ENCODE measurements at regions of chr14 and their contacts with region 1.

Region 1: DNA sequence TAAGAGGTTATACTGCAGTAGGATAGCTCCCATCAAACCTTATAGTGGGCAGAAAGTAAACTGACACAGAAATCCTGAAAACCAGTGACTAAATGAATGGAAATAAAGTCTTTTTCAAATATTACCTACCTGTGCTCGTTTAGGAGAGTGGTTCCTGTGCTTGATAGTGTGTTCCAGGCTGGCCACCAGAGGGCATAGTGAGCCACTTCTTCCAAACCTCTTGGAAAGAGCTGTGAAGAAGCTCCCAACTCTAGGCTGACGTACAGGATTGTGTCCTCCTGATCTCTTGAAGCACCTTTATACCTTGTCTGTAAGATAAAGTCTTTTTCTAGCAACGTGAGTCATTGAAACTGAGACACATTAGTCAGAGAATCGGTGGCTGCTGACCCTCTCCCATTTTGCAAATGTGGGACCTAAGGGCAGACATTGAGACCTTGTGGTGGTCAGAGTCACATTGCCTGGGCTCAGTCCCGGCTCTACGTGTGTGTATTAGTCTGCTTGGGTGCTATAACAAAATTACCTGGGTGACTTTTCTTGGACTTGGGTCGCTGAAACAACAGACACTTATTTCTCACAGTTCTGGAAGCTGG is 17.6 kb downstream of the TDP1 start:
- DNase-seq: peak; percentile 62
- ATAC-seq: peak; percentile 75
- H3K4me3 Mint-ChIP-seq: no peak overlapping the region
- H3K27ac Mint-ChIP-seq: peak overlapping the region; percentile 24
- H3K4me1 Mint-ChIP-seq: no peaks in the 10 kb centered on the region
- H3K27me3 Mint-ChIP-seq: no peaks in the 10 kb centered on the region

Region 2: DNA sequence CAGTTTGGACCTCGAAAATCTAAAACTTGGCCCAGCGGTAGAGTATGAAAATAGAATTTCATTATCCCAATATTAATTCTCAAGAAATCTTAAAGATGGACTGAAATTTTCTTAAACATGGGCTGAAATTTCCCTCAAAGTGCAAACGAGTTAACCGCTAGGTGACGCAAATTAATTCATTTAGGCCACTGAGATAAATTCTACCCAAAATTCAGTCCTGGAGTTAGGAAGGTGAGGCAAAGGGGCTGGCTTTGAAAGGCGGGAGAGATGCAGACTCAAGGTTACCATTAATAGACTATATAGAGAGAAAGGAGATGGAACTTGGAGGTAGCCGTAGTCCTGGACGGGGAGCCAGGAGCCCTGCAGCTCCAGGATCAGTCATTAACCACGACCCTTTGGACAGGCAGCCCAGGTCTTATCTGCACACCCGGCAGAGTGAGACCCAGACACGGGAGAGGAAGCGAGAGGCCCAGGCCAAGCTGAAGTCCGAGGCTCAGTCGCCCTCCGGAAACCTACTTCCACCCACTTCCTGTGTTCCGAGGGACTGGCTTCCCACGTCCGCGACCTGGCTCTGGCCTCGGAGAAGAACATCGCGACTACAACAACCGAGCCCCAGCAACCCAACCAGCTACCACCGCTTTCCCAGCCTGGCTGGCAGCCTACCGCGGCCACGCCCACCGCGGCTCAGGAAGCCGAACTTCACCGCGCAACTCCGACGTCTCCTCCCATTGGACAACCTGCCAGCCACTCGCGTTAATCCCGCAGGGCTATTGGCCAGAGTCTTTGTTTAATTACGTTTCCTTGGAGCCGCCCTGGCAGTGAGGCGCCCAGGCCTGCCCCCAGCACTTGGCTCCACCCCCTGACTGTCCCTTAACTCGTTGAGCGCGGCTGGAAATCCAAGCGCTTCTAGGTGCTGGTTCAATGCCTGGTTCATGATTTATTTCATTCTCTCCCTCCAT is 19.0 kb before region 1 on chr14 and contains the start of gene EFCAB11:
- CTCF ChIA-PET with region 1: interaction called, 96 read pairs
- POLR2A ChIA-PET with region 1: interaction called, 5 read pairs
- DNase-seq: peak; percentile 98
- ATAC-seq: peak; percentile 85
- H3K4me3 Mint-ChIP-seq: peak within 1 kb of the TSS; percentile 99
- H3K27ac Mint-ChIP-seq: peak within 1 kb of the TSS; percentile 96
- H3K4me1 Mint-ChIP-seq: peaks cover 40% of the 10 kb centered on the region
- H3K27me3 Mint-ChIP-seq: no peaks in the 10 kb centered on the region
- total RNA-seq, gene EFCAB11: 9.8 to 11.9 TPM

Region 3: DNA sequence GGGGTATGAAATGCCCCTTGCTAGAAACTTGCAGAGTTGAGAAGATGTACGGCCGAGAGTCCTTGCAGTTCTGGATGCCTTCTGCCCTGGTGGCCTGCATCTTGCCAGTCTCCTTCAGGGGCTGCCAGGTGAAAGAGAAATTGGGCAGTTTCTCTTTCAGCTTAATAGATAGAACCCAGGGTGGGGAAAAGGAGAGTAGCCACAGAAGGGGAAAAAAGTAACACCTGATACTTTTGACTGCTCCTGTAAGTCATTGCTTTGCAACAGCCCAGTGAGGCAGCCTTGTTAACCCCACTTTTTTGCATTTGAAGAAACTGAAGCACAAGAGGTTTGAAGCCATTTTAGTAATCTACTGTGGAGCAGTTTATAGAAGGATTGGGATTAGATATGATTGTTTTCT is 10.0 kb after region 1 on chr14:
- CTCF ChIA-PET with region 1: interaction called, 38 read pairs
- POLR2A ChIA-PET with region 1: no interaction called
- DNase-seq: no peak
- ATAC-seq: no peak
- H3K4me3 Mint-ChIP-seq: no peak overlapping the region
- H3K27ac Mint-ChIP-seq: no peak overlapping the region
- H3K4me1 Mint-ChIP-seq: no peaks in the 10 kb centered on the region
- H3K27me3 Mint-ChIP-seq: no peaks in the 10 kb centered on the region

Region 4: GRCh38 chr14:90039253-90040010 is 66.1 kb after region 1 on chr14:
- CTCF ChIA-PET with region 1: no interaction called
- POLR2A ChIA-PET with region 1: no interaction called
- DNase-seq: no peak
- ATAC-seq: no peak
- H3K4me3 Mint-ChIP-seq: no peak overlapping the region
- H3K27ac Mint-ChIP-seq: no peak overlapping the region
- H3K4me1 Mint-ChIP-seq: no peaks in the 10 kb centered on the region
- H3K27me3 Mint-ChIP-seq: no peaks in the 10 kb centered on the region

Region 5: GRCh38 chr14:90105756-90106155 is 132.4 kb after region 1 on chr14:
- CTCF ChIA-PET with region 1: no interaction called
- POLR2A ChIA-PET with region 1: no interaction called
- DNase-seq: no peak
- ATAC-seq: no peak
- H3K4me3 Mint-ChIP-seq: no peak overlapping the region
- H3K27ac Mint-ChIP-seq: no peak overlapping the region
- H3K4me1 Mint-ChIP-seq: no peaks in the 10 kb centered on the region
- H3K27me3 Mint-ChIP-seq: peaks cover 4% of the 10 kb centered on the region

Region 6: DNA sequence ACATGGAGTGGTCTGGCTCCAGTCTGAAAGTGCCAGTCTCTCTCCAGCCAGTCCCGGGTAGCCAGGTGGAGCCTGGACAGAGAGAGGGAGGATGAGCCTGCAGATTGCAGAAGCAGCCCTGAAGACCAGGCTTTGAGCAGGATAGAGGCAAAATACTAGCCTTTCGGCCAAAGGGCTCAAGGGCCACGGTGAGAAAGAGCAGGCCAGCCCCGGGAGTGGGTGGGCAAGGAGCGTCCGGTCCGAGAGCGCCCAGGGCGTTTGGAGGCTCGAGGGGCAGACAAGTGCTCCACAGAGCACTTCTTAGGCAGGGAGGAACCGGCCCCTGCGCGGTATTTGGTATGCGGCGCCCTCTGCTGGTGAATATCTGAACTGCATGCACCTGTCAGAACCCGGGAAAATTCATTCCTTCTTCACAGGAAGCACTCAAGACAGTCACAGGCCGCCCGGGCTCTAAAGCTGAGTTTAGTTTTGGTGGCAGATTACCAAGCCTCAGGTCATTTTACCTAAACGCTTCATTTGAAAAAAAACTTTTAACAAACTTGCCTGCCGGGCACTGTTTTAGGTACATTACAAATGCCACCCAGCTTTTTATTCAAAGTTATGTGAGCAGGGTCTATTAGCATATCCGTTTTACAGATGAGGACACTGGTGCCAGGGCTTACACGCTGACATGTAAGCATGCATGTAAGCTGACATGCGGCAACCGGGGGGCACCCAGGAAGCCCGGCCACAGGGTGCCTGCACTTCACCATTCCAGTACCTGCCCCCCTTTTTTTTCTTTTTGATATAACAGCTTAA is 262.0 kb after region 1 on chr14:
- CTCF ChIA-PET with region 1: interaction called, 29 read pairs
- POLR2A ChIA-PET with region 1: no interaction called
- DNase-seq: peak; percentile 77
- ATAC-seq: peak; percentile 81
- H3K4me3 Mint-ChIP-seq: no peak overlapping the region
- H3K27ac Mint-ChIP-seq: no peak overlapping the region
- H3K4me1 Mint-ChIP-seq: peaks cover 3% of the 10 kb centered on the region
- H3K27me3 Mint-ChIP-seq: peaks cover 11% of the 10 kb centered on the region